ENCODE measurements at regions of chr1 and their contacts with region 1.

Region 1: DNA sequence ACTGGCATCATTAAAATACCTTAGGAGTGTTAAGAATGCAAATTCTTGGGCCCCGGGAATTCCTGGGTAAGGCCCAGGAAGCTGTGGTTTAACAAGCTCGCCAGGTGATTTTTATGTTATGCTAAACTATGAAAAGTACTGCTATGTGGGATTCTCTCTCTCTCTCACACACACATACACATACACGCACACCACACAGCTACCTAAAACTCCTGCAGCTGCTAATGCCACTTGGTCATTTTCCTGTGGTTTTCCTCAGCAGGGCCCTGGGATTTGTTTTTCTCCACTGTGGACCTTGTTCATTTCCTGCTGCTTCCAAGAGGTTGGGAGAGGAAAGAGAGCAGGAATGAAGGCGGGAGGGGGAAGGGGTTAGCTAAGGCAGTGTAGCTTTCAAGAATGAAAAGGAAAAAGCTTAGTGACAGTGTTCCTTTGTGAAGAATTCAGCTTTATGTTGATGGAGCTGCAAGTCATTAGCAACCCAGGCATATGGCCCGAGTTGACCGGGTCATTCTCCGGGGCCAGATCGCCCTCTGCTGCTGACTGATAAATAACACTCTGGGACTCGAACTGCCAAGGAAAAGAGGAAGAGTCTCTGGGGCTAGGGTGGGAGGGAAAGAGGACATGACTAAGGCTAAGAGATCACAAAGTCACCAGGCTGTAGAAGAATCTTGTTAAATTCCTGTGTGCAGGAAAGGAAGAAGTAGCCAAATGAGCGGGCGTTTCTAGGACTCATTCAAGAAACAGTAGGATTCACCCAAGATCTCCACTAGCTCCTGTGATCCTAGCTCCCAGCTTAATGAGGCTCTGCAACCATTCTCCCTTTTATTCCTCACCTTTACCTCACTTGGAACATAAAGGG is 30.5 kb upstream of the LRIG2 start:
- DNase-seq: peak; percentile 62 to 75
- ATAC-seq: peak; percentile 76 to 94 (median 92)
- H3K4me3 ChIP-seq: no peak overlapping the region
- H3K27ac ChIP-seq: peak overlapping the region in 2 of 10 donors; percentile 3 to 31
- H3K4me1 ChIP-seq: peaks cover 0 to 39% (median 13%) of the 10 kb centered on the region in 9 donors
- H3K27me3 ChIP-seq: no peaks in the 10 kb centered on the region
- CTCF ChIP-seq: peak; percentile 29 to 77 (median 62)

Region 2: GRCh38 chr1:112715264-112716053 is 327.1 kb before region 1 on chr1 and contains the start of gene PPM1J:
- intact Hi-C with region 1: loop called (anchors 1 to 10 kb)
- DNase-seq: peak; percentile 98 to 99
- ATAC-seq: peak; percentile 87 to 96 (median 91)
- H3K4me3 ChIP-seq: peak within 1 kb of the TSS; percentile 55 to 81 (median 71)
- H3K27ac ChIP-seq: peak within 1 kb of the TSS in 9 of 10 donors; percentile 67 to 88 (median 78)
- H3K4me1 ChIP-seq: peaks cover 2 to 35% (median 23%) of the 10 kb centered on the region in 9 donors
- H3K27me3 ChIP-seq: peaks cover 0 to 30% (median 12%) of the 10 kb centered on the region in 7 donors
- CTCF ChIP-seq: peak in 1 of 9 donors; percentile 2
- total RNA-seq, gene PPM1J: 5.8 to 11.0 (median 8.5) TPM

Region 3: GRCh38 chr1:112722601-112723510 is 319.7 kb before region 1 on chr1:
- intact Hi-C with region 1: loop called in 7 of 10 experiments (anchors 1 to 10 kb)
- DNase-seq: no peak
- ATAC-seq: peak in 6 of 8 donors; percentile 20 to 53 (median 30)
- H3K4me3 ChIP-seq: peak overlapping the region in 8 of 10 donors; percentile 8 to 41 (median 32)
- H3K27ac ChIP-seq: no peak overlapping the region
- H3K4me1 ChIP-seq: peaks cover 0 to 23% (median 7%) of the 10 kb centered on the region in 9 donors
- H3K27me3 ChIP-seq: peaks cover 0 to 32% (median 12%) of the 10 kb centered on the region in 7 donors
- CTCF ChIP-seq: no peak

Region 4: DNA sequence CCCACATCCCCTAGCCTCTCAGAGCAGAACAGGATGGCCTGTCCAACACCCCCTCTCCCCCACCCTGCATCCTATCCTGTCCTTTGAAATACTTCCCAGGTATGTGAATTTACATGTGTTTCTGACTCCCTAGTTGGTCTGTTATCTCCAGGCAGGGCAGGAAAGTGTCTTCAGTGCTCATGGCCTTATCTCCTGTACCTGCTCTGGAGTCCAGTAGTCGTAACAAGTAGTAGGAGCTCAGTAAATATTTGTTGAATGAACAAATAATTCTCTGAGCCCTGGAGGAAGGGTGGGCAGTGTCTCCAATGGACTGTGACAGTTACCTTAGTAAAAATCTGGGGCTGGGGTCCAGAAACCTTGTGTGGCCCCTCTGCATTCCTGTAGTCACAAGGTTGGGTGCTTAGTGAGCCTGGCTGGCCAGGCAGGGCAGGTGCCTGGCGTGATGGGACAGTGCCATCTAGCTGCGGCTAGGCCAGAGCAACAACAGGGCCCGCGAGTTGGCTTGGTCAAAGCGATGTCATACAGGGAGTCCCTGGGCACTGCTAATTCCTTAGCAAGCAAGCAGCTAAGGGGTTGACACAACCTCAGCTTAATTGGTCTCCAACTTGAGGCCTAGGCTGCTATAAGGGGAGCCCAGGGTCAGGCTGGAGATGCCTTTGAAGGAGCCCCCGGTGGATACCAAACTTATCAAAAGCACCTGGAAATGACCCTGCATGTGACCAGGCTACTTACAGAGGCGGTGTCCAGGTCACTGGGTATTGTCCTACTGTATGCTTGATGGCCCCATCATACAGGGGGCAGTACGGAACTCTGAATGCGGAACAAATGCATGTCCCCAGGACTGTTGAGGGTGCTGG is 238.4 kb before region 1 on chr1:
- intact Hi-C with region 1: loop called in 9 of 10 experiments (anchors 2 to 10 kb)
- DNase-seq: peak; percentile 50 to 65
- ATAC-seq: peak; percentile 82 to 90 (median 86)
- H3K4me3 ChIP-seq: no peak overlapping the region
- H3K27ac ChIP-seq: no peak overlapping the region
- H3K4me1 ChIP-seq: peaks cover 0 to 5% (median 0%) of the 10 kb centered on the region in 9 donors
- H3K27me3 ChIP-seq: no peaks in the 10 kb centered on the region
- CTCF ChIP-seq: peak; percentile 34 to 82 (median 75)

Region 5: DNA sequence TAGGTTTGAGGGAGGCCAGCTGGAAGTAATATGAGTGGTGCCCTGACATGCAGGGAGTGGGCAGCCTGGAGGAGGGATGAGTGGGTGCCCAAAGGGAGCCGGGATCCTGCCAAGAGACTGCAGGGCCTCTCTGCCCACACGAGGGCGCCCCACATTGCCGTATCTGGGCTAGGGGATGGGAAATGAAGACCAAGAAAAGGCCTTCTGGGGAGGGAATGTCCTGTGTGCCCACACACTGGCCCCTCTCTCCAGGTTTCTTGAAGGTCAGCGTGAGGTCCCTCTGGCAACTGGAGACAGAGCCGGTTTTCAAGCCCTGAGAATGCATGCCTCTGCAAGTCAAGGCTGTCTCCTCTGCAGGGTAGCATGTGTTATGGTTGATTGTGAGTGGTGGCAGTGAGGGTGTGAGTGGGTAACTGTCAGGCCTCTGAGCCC is 233.2 kb before region 1 on chr1:
- intact Hi-C with region 1: loop called in 9 of 10 experiments (anchors 2 to 10 kb)
- DNase-seq: peak; percentile 70 to 75
- ATAC-seq: peak; percentile 84 to 89 (median 86)
- H3K4me3 ChIP-seq: no peak overlapping the region
- H3K27ac ChIP-seq: no peak overlapping the region
- H3K4me1 ChIP-seq: peaks cover 0 to 7% (median 0%) of the 10 kb centered on the region in 9 donors
- H3K27me3 ChIP-seq: no peaks in the 10 kb centered on the region
- CTCF ChIP-seq: peak; percentile 40 to 92 (median 83)

Region 6: DNA sequence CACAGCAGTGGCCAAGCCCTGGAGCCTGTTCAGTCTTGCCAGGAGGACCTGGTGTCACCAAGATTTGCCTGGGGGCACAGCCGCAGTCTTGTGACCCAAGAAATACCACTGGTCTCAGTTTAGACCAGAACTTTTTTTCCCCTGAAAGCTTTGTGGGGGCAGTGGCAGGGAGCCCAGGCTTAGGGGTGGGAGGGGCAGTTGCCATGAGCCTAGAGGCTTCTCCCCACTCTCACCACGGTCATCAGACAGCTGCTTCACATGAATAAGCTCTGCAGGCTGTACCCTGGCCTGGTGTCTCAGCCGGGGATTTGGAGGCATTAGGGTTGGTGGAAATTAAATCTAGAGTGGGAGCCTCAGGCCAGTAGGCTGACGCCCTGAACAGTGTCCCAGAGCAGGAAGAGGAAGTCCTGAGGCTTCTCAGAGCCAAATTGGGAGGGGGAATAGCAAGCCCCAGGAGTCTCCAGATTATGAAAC is 160.2 kb before region 1 on chr1:
- intact Hi-C with region 1: loop called (anchors 1 to 5 kb)
- DNase-seq: no peak
- ATAC-seq: peak; percentile 6 to 85 (median 46)
- H3K4me3 ChIP-seq: no peak overlapping the region
- H3K27ac ChIP-seq: peak overlapping the region in 8 of 10 donors; percentile 10 to 76 (median 65)
- H3K4me1 ChIP-seq: peaks cover 0 to 23% (median 17%) of the 10 kb centered on the region in 9 donors
- H3K27me3 ChIP-seq: no peaks in the 10 kb centered on the region
- CTCF ChIP-seq: no peak

Measured in heart right ventricle (tissue), 16 donors.